CD8-positive, alpha-beta T cell (primary cell): ENCODE measurements at regions of chr2 and their contacts with region 1.

Region 1: DNA sequence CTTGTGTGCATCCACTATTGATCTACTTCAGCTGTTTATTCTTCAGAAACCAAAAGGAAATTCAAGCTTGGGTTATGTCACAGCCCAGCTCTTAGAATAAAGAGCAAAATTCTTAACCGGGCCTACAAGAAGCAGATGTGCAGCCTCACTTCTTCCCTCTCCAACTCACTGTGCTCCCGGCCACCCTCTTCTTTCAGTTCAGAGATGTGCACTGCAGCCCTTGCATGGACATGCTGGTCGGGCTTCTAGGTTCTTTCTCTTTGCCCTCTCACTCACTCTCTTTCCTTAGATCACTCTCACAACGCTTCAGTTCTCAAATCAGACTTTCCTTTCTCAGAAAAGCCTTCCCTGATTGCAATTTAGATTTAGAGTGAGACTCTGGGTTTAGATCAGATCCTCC is 104.1 kb downstream of the CHN1 start:
- DNase-seq: peak in 1 of 9 experiments; percentile 17
- ATAC-seq: no peak
- H3K4me3 ChIP-seq: no peak overlapping the region
- H3K4me3 Mint-ChIP-seq: peak overlapping the region; percentile 13
- H3K27ac ChIP-seq: no peak overlapping the region
- H3K27ac Mint-ChIP-seq: peak overlapping the region; percentile 82
- H3K4me1 ChIP-seq: peaks cover 14% of the 10 kb centered on the region
- H3K4me1 Mint-ChIP-seq: peaks cover 20% of the 10 kb centered on the region
- H3K27me3 ChIP-seq: no peaks in the 10 kb centered on the region
- H3K27me3 Mint-ChIP-seq: no peaks in the 10 kb centered on the region
- CTCF ChIP-seq: no peak

Region 2: GRCh38 chr2:174778085-174778981 is 122.7 kb before region 1 on chr2:
- CTCF ChIA-PET with region 1: no interaction called
- POLR2A ChIA-PET with region 1: no interaction called
- intact Hi-C with region 1: loop called in 1 of 2 experiments (anchors 5 kb)
- DNase-seq: peak; percentile 61 to 94 (median 81)
- ATAC-seq: peak; percentile 84
- H3K4me3 ChIP-seq: peak overlapping the region in 1 of 2 experiments; percentile 16
- H3K4me3 Mint-ChIP-seq: peak overlapping the region; percentile 57
- H3K27ac ChIP-seq: peak overlapping the region; percentile 57 to 62
- H3K27ac Mint-ChIP-seq: peak overlapping the region; percentile 93
- H3K4me1 ChIP-seq: peaks cover 52% of the 10 kb centered on the region
- H3K4me1 Mint-ChIP-seq: peaks cover 51% of the 10 kb centered on the region
- H3K27me3 ChIP-seq: no peaks in the 10 kb centered on the region
- H3K27me3 Mint-ChIP-seq: no peaks in the 10 kb centered on the region
- CTCF ChIP-seq: no peak

Region 3: GRCh38 chr2:174859563-174860169 is 41.4 kb before region 1 on chr2:
- CTCF ChIA-PET with region 1: no interaction called
- POLR2A ChIA-PET with region 1: no interaction called
- intact Hi-C with region 1: loop called in 1 of 2 experiments (anchors 5 kb)
- DNase-seq: no peak
- ATAC-seq: no peak
- H3K4me3 ChIP-seq: no peak overlapping the region
- H3K4me3 Mint-ChIP-seq: no peak overlapping the region
- H3K27ac ChIP-seq: no peak overlapping the region
- H3K27ac Mint-ChIP-seq: no peak overlapping the region
- H3K4me1 ChIP-seq: no peaks in the 10 kb centered on the region
- H3K4me1 Mint-ChIP-seq: no peaks in the 10 kb centered on the region
- H3K27me3 ChIP-seq: no peaks in the 10 kb centered on the region
- H3K27me3 Mint-ChIP-seq: no peaks in the 10 kb centered on the region
- CTCF ChIP-seq: no peak